GM12878 (cell line): ENCODE measurements at regions of chr18 and their contacts with region 1.

Region 1: DNA sequence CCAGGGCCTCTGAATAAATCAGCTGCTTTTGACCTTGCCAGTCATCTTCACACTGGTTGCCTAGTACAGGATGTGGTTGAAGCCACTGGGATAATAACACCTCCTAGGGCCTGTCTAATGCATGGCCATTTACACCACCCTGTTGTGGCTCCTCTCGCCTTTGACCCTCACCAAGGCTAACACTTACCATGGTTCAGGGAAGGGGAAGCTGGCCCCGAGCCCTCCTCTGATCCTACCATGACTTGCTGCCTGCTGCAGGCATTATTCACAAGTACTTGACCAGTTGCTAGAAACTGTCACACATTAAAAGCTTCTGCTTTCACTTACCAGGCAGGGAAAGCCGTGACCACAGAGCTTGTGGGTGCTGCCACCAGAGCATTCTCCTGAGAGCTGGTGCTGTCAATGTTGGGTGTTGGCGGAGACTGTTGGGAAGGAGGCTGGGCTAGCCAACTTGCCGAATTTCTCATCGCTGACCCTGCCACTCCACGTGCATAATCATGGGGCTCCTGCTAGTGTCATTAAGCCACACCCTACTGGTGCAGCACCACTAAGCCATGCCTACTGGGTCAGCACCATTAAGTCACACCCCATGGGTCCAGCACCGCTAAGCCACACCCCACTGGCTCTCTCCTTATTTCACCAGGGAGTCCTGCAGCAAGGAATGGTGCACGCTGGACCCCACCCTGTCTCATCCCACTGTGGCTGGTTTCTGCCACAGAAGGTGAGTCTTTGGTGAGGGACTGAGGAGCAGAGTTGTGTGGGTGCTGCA is 47.0 kb upstream of the TTC39C start:
- DNase-seq: peak; percentile 53
- ATAC-seq: peak; percentile 72
- H3K4me3 ChIP-seq: 0 out of 2 replicates have a peak overlapping the region, but pooled peaks have one; percentile 9
- H3K27ac ChIP-seq: no peak overlapping the region; the same call in 1 of the 2 replicates
- H3K4me1 ChIP-seq: peaks cover 37% of the 10 kb centered on the region
- H3K27me3 ChIP-seq: no peaks in the 10 kb centered on the region
- CTCF ChIP-seq: no peak
- EP300 ChIP-seq: no peak
- POLR2A ChIP-seq: no peak
- RAD21 ChIP-seq: no peak

Region 2: DNA sequence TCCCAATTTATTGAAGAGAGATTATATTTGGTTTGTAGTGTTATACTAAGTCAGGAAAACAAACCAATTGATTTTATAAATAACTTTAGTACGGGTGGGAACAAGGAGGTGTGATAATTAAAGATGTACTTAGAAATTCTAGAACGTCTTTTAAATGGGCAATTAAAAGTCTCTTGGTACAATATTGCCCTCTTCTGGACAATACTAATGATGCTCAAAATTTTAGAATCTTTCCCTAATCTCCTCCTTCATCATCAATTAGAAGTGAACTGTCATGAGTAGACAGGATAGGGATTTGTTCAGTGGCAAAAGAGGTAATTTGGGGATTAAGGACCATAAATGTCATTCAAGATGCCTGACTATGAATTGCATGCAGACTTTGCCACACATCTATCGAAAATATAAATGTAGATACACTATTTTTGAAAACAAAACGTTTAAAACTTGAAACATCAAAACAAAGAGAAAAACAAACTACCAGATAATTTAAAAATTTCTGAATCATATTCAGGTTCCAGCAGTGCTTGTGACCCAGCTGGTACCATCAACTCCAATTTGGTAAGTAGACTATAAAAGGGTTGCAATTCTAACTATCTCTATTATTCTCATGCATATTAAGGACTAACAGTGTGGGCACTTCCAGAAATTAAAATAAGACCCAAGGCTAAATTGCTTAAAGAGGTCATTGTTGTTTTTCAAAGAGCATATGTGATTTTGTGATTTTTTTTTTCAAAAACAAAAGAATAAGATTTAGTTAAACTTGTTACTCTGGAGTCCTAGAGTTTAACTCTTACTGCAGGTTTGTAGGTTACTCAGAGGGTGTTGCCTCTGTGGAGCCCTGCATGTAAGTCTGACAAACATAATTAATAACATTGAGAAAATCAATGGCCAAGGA is 154.7 kb before region 1 on chr18:
- CTCF ChIA-PET with region 1: no interaction called
- POLR2A ChIA-PET with region 1: no interaction called
- RAD21 ChIA-PET with region 1: no interaction called
- SMC1A ChIA-PET with region 1: no interaction called
- in situ Hi-C with region 1: no loop called
- intact Hi-C with region 1: no loop called
- DNase-seq: no peak
- ATAC-seq: no peak
- H3K4me3 ChIP-seq: no peak overlapping the region
- H3K27ac ChIP-seq: no peak overlapping the region
- H3K4me1 ChIP-seq: peaks cover 15% of the 10 kb centered on the region
- H3K27me3 ChIP-seq: no peaks in the 10 kb centered on the region; a peak in 1 of 4 replicates
- CTCF ChIP-seq: peak; percentile 30 to 53 (median 38); a peak in 3 of 6 replicates
- EP300 ChIP-seq: no peak
- POLR2A ChIP-seq: no peak
- RAD21 ChIP-seq: peak; percentile 67

Region 3: DNA sequence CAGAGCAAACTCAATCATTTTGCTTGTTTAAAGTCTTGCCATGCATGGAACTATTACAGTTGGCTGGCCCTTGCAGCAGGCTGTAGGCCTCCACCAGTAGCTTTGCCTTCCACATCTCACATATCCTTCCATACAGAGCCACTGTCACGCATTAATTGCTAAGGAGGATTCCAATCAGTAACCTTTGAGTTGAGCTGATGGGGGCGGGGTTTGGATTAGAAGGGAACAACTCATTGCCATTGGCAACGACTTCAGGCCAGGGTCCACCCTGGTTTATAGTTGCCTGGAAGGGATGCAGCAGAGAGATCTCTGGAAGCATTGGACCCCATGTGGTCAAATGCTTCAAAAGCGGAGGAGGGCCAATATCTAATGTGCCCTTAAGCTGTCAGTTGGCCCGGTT is 16.3 kb before region 1 on chr18:
- CTCF ChIA-PET with region 1: interaction called, 10 read pairs
- POLR2A ChIA-PET with region 1: no interaction called
- RAD21 ChIA-PET with region 1: interaction called, 3 read pairs
- SMC1A ChIA-PET with region 1: interaction called, 7 read pairs
- in situ Hi-C with region 1: no loop called
- intact Hi-C with region 1: no loop called
- DNase-seq: no peak
- ATAC-seq: no peak
- H3K4me3 ChIP-seq: no peak overlapping the region
- H3K27ac ChIP-seq: no peak overlapping the region
- H3K4me1 ChIP-seq: no peaks in the 10 kb centered on the region
- H3K27me3 ChIP-seq: no peaks in the 10 kb centered on the region
- CTCF ChIP-seq: no peak
- EP300 ChIP-seq: no peak
- POLR2A ChIP-seq: no peak
- RAD21 ChIP-seq: no peak

Region 4: GRCh38 chr18:23994361-23994902 is 26.9 kb after region 1 on chr18:
- CTCF ChIA-PET with region 1: interaction called, 5 read pairs
- POLR2A ChIA-PET with region 1: no interaction called
- RAD21 ChIA-PET with region 1: interaction called, 6 read pairs
- SMC1A ChIA-PET with region 1: interaction called, 10 read pairs
- in situ Hi-C with region 1: no loop called
- intact Hi-C with region 1: no loop called
- DNase-seq: no peak
- ATAC-seq: peak; percentile 13; the same call in 2 of the 3 replicates
- H3K4me3 ChIP-seq: peak overlapping the region; percentile 68
- H3K27ac ChIP-seq: peak overlapping the region; percentile 62
- H3K4me1 ChIP-seq: peaks cover 30% of the 10 kb centered on the region
- H3K27me3 ChIP-seq: no peaks in the 10 kb centered on the region
- CTCF ChIP-seq: no peak
- EP300 ChIP-seq: no peak
- POLR2A ChIP-seq: peak; percentile 44; the same call in 1 of the 2 replicates
- RAD21 ChIP-seq: 0 out of 2 replicates have a peak, but pooled peaks have one; percentile 6

Region 5: DNA sequence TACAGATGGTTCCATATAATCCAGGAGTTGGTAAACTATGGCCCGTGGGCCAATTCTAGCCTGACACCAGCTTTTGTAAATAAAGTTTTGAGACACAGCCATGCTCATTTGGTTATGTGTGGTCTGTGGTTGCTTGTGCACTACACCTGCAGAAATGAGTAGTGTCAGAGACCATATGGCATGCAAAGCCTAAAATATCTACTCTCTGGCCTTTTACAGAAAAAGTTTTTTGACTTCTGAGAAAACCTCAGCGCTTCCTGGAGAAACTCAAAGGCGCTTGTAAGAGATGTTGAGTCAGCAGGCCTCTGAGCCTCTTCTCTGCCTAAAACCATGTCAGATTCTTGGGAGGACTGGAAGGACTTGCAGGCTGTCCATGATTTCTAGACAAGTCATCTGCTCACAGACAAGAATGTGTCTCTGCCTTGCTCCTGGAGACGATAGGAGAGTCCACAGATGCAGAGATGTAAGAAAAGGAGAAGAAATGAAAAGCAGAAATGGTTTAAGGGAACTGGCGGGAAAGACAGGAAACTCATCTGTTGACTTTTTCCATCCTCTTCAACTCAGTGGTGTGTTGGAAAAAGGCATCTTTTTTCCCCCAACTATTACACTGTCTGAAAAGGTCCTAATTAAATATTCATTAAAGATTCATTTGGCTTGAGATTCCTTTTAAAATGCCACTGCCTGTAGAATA is 52.3 kb after region 1 on chr18:
- CTCF ChIA-PET with region 1: interaction called, 5 read pairs
- POLR2A ChIA-PET with region 1: interaction called, 3 read pairs
- RAD21 ChIA-PET with region 1: interaction called, 8 read pairs
- SMC1A ChIA-PET with region 1: interaction called, 5 read pairs
- in situ Hi-C with region 1: no loop called
- intact Hi-C with region 1: loop called (anchors 2 kb)
- DNase-seq: peak; percentile 83
- ATAC-seq: peak; percentile 73
- H3K4me3 ChIP-seq: peak overlapping the region; percentile 51
- H3K27ac ChIP-seq: peak overlapping the region; percentile 86
- H3K4me1 ChIP-seq: peaks cover 46% of the 10 kb centered on the region
- H3K27me3 ChIP-seq: no peaks in the 10 kb centered on the region
- CTCF ChIP-seq: no peak
- EP300 ChIP-seq: peak; percentile 85 to 92
- POLR2A ChIP-seq: 0 out of 2 replicates have a peak, but pooled peaks have one; percentile 32
- RAD21 ChIP-seq: peak; percentile 28; the same call in 1 of the 2 replicates

Region 6: DNA sequence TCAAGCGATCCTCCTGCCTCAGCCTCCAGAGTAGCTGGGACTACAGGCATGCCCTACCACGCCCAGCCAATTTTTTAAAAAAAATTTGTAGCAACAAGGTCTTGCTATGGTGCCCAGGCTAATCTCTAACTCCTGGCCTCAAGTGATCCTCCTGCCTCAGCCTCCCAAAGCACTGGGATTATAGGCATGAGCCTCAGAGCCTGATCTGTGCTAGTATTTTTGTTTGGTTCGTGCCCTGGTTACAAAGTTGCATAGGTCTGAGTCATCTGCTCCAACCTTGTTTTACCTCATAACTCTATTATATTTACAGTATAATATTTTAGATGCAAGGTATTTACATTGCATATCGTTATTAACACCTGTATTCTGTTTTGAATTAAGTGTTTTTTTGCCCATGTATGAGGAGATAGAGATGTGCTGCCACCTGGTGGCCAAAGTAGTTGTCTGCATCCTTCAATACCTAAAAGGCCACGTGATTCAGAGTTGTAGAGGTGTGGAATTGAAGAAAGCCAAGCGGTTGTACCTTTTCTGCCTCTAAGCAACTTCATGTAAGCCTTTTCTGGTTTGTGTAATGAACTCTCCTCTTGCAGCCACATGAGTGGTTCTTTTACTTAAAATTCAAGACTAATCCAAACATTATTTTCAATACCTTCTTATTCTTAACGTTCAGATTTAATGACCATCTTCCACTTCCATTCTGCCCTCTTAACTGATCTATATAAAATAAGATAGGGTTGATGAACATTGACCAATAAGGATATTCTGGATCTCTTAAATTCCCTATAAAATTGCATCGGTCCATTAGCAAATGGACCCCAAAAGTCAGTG is 151.5 kb after region 1 on chr18:
- CTCF ChIA-PET with region 1: interaction called, 8 read pairs
- POLR2A ChIA-PET with region 1: no interaction called
- RAD21 ChIA-PET with region 1: interaction called, 3 read pairs
- SMC1A ChIA-PET with region 1: interaction called, 10 read pairs
- in situ Hi-C with region 1: loop called (anchors 5 kb)
- intact Hi-C with region 1: loop called (anchors 1 kb)
- DNase-seq: peak; percentile 56
- ATAC-seq: peak; percentile 93
- H3K4me3 ChIP-seq: no peak overlapping the region
- H3K27ac ChIP-seq: no peak overlapping the region
- H3K4me1 ChIP-seq: no peaks in the 10 kb centered on the region
- H3K27me3 ChIP-seq: no peaks in the 10 kb centered on the region
- CTCF ChIP-seq: peak; percentile 64 to 78 (median 77)
- EP300 ChIP-seq: no peak
- POLR2A ChIP-seq: no peak
- RAD21 ChIP-seq: peak; percentile 86

Region 7: DNA sequence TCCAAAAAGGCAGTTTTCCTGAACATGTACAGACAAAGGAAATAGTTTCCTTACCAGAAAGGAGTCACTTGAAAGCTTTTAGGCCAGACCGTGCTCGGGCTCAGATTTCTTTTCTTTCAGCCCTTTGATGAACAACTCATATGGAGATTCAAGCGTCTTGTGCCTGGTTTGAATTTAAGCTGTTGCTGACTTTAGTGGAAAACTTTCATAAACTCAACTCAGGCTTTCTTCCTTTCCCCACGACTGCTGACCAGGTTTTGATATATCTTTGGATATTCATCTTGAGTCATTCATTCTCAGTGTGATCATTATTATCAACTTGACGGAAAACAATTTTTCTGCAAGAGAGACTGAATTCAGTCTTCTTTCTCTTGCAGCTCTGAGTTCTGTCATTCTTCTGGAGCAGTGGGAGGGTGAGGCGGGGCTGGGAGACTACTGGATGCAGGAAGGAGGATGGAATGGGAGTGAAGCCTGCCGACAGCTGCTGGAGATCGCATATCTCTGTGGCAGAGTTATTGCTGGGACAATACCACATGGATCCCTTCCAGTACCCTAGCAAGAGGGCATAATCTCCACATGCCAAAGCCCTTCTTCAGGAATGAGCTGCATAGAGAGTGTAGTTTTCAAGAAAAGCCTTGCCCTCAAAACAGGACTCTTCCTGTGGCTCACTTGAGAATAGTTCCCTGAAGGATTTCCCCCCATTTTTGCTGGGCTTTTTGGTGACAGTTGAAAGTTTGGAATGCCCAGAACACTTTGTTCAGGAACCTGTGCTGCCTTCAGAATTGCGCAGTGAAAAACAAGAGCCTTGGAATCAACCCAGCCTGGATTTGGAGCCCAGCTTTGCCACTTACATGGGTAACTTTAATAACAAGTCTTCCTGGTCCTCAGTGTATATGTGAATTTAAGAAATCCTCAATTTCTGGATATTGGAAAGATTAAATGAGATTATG is 1020.1 kb after region 1 on chr18:
- CTCF ChIA-PET with region 1: no interaction called
- POLR2A ChIA-PET with region 1: no interaction called
- RAD21 ChIA-PET with region 1: no interaction called
- SMC1A ChIA-PET with region 1: no interaction called
- in situ Hi-C with region 1: no loop called
- intact Hi-C with region 1: no loop called
- DNase-seq: no peak
- ATAC-seq: no peak
- H3K4me3 ChIP-seq: no peak overlapping the region
- H3K27ac ChIP-seq: no peak overlapping the region
- H3K4me1 ChIP-seq: no peaks in the 10 kb centered on the region; the same call in 1 of the 2 replicates
- H3K27me3 ChIP-seq: no peaks in the 10 kb centered on the region; a peak in 1 of 4 replicates
- CTCF ChIP-seq: no peak
- EP300 ChIP-seq: no peak
- POLR2A ChIP-seq: no peak
- RAD21 ChIP-seq: no peak